AG04449 (cell line): ENCODE measurements at regions of chr17 and their contacts with region 1.

Region 1: GRCh38 chr17:56960596-56961538 is at the start of gene COIL:
- DNase-seq: peak; percentile 49
- H3K4me3 ChIP-seq: peak within 1 kb of the TSS; percentile 84
- CTCF ChIP-seq: peak; percentile 98

Region 2: DNA sequence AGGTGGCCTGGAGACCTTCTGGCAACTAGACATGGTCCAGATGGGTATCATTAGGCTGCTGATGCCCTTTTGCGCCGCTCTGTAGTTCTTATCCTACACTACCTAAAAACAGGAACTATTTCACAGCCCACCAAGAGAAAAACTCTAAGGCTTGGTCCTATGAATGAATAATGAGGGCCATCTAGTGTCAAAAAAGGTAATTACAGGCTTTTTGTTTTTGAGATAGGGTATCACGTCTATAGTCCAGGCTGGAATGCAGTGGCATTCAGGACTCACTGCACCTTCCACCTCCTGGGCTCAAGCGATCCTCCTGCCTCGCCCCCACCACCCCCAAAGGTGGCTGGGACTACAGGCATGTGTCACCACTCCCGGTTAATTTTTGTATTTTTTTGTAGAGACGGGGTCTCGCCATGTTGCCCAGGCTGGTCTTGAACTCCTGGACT is 20.9 kb before region 1 on chr17:
- CTCF ChIA-PET with region 1: interaction called, 14 read pairs
- POLR2A ChIA-PET with region 1: no interaction called
- DNase-seq: no peak
- H3K4me3 ChIP-seq: no peak overlapping the region
- CTCF ChIP-seq: peak; percentile 25

Region 3: GRCh38 chr17:56977673-56978395 is 17.0 kb after region 1 on chr17 and contains the start of gene SCPEP1:
- CTCF ChIA-PET with region 1: interaction called, 27 read pairs
- POLR2A ChIA-PET with region 1: no interaction called
- DNase-seq: no peak
- H3K4me3 ChIP-seq: peak within 1 kb of the TSS; percentile 78
- CTCF ChIP-seq: no peak

Region 4: GRCh38 chr17:56988901-56989572 is 28.2 kb after region 1 on chr17:
- CTCF ChIA-PET with region 1: no interaction called
- POLR2A ChIA-PET with region 1: no interaction called
- DNase-seq: no peak
- H3K4me3 ChIP-seq: no peak overlapping the region
- CTCF ChIP-seq: no peak

Region 5: DNA sequence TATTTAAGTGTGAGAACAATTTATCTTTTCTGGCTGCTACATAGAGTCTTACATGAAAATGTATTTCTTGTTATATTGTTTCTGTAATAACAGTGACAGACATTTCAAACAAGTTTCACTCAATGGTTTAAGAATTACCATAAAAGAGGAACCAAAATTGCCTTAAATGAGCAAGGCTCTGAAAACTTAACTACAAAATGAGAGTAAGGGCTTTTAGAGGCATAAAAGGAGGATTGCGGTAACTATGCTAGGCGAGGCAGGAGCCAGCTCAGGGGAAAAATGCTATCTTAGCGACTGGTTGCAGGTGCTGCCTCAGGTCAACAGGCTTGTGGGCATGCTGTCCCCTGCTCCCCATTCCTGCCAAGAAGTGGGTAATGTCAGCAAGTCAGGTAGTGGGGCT is 213.7 kb after region 1 on chr17:
- CTCF ChIA-PET with region 1: no interaction called
- POLR2A ChIA-PET with region 1: no interaction called
- DNase-seq: no peak
- H3K4me3 ChIP-seq: no peak overlapping the region
- CTCF ChIP-seq: no peak